K562 (cell line): ENCODE measurements at regions of chr5 and their contacts with region 1.

Region 1: GRCh38 chr5:150022163-150022540 is 21.6 kb downstream of the HMGXB3 start:
- DNase-seq: no peak
- ATAC-seq: no peak
- H3K4me3 ChIP-seq: no peak overlapping the region
- H3K27ac ChIP-seq: no peak overlapping the region
- H3K4me1 ChIP-seq: peaks cover 7 to 20% of the 10 kb centered on the region in 2 experiments; a peak in 4 of 5 replicates
- H3K27me3 ChIP-seq: no peaks in the 10 kb centered on the region
- CTCF ChIP-seq: no peak
- EP300 ChIP-seq: no peak
- POLR2A ChIP-seq: no peak
- RAD21 ChIP-seq: no peak

Region 2: GRCh38 chr5:149979896-149980295 is 42.3 kb before region 1 on chr5:
- CTCF ChIA-PET with region 1: no interaction called
- POLR2A ChIA-PET with region 1: no interaction called
- in situ Hi-C with region 1: no loop called
- intact Hi-C with region 1: no loop called
- DNase-seq: no peak
- ATAC-seq: no peak
- H3K4me3 ChIP-seq: no peak overlapping the region
- H3K27ac ChIP-seq: no peak overlapping the region
- H3K4me1 ChIP-seq: no peaks in the 10 kb centered on the region
- H3K27me3 ChIP-seq: no peaks in the 10 kb centered on the region
- CTCF ChIP-seq: no peak
- EP300 ChIP-seq: no peak
- POLR2A ChIP-seq: no peak
- RAD21 ChIP-seq: no peak

Region 3: DNA sequence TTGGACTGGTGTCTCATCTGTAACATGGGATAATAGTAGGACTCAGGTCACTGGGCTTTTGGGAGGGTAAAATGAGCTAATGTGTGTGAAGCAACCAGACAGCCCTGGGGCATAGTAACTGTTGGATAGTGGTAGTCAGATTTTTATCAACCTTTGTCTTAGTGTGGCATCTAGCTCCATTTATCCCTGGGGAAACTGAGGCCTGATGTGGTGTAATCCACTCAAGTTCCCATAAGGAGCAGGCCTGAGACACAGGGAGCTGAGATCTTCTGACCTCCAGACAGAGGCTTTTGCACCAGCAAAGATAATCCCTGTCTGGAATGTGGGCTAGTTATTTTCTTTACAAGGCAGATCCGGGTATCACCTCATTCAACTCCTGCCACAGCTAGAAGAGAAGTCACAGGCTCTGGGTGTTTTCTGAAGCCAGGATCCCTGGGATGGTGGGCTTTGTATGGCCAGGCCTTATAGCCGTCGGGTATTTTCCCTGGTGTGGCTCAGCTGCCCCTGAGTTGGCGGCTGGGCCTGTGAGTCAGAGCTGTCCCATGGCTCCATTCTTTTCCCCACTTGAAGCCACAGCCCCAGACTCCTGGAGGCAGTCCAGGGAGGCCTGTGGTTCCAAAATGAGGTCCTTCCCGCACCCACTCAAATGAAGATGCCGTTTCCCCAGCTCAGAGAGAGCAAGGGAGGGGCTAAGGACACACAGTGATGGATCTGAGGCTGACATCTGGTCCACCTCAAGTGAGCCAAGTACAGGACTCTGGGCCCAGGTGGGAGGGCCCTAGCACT is 90.3 kb after region 1 on chr5:
- CTCF ChIA-PET with region 1: no interaction called
- POLR2A ChIA-PET with region 1: no interaction called
- in situ Hi-C with region 1: no loop called
- intact Hi-C with region 1: loop called (anchors 10 kb)
- DNase-seq: peak in 1 of 4 experiments; percentile 7
- ATAC-seq: no peak
- H3K4me3 ChIP-seq: no peak overlapping the region
- H3K27ac ChIP-seq: no peak overlapping the region
- H3K4me1 ChIP-seq: peaks cover 21 to 41% of the 10 kb centered on the region in 2 experiments; a peak in 4 of 5 replicates
- H3K27me3 ChIP-seq: no peaks in the 10 kb centered on the region
- CTCF ChIP-seq: no peak
- EP300 ChIP-seq: no peak
- POLR2A ChIP-seq: no peak
- RAD21 ChIP-seq: no peak

Region 4: GRCh38 chr5:150217873-150218692 is 195.9 kb after region 1 on chr5:
- CTCF ChIA-PET with region 1: no interaction called
- POLR2A ChIA-PET with region 1: interaction called, 3 read pairs
- in situ Hi-C with region 1: no loop called
- intact Hi-C with region 1: loop called (anchors 2 kb)
- DNase-seq: peak; percentile 82 to 89 (median 88)
- ATAC-seq: peak; percentile 97
- H3K4me3 ChIP-seq: no peak overlapping the region
- H3K27ac ChIP-seq: no peak overlapping the region
- H3K4me1 ChIP-seq: peaks cover 3 to 4% of the 10 kb centered on the region in 2 experiments; a peak in 3 of 5 replicates
- H3K27me3 ChIP-seq: peaks cover 13 to 34% of the 10 kb centered on the region in 2 experiments; a peak in 4 of 5 replicates
- CTCF ChIP-seq: peak; percentile 89 to 94 (median 90)
- EP300 ChIP-seq: no peak
- POLR2A ChIP-seq: no peak
- RAD21 ChIP-seq: peak; percentile 96

Region 5: GRCh38 chr5:150357326-150358260 is 335.4 kb after region 1 on chr5 and contains the start of gene TCOF1:
- CTCF ChIA-PET with region 1: no interaction called
- POLR2A ChIA-PET with region 1: no interaction called
- in situ Hi-C with region 1: no loop called
- intact Hi-C with region 1: loop called (anchors 10 kb)
- DNase-seq: peak; percentile 97 to 98 (median 98)
- ATAC-seq: peak; percentile 99
- H3K4me3 ChIP-seq: peak within 1 kb of the TSS; percentile 74
- H3K27ac ChIP-seq: peak within 1 kb of the TSS; percentile 74
- H3K4me1 ChIP-seq: peaks cover 13 to 14% of the 10 kb centered on the region in 2 experiments; a peak in 4 of 5 replicates
- H3K27me3 ChIP-seq: peaks cover 6% of the 10 kb centered on the region in 2 experiments; a peak in 3 of 5 replicates
- CTCF ChIP-seq: no peak
- EP300 ChIP-seq: no peak
- POLR2A ChIP-seq: peak; percentile 84
- RAD21 ChIP-seq: no peak
- polyA plus RNA-seq, gene TCOF1: 9.8 to 17.3 TPM